ENCODE measurements at regions of chr3 and their contacts with region 1.

Region 1: GRCh38 chr3:58008140-58009025 is at the start of gene FLNB:
- DNase-seq: peak; percentile 72
- ATAC-seq: peak; percentile 93
- H3K4me3 Mint-ChIP-seq: peak within 1 kb of the TSS; percentile 95
- H3K27ac Mint-ChIP-seq: peak within 1 kb of the TSS; percentile 73
- H3K4me1 Mint-ChIP-seq: peaks cover 16% of the 10 kb centered on the region
- H3K27me3 Mint-ChIP-seq: no peaks in the 10 kb centered on the region
- CTCF ChIP-seq: no peak
- total RNA-seq, gene FLNB: 13.4 and 16.7 TPM in 2 replicates

Region 2: GRCh38 chr3:57983734-57984518 is 24.5 kb before region 1 on chr3:
- CTCF ChIA-PET with region 1: interaction called, 3 read pairs
- POLR2A ChIA-PET with region 1: interaction called, 3 read pairs
- intact Hi-C with region 1: loop called (anchors 1 kb)
- DNase-seq: peak; percentile 34
- ATAC-seq: peak; percentile 97
- H3K4me3 Mint-ChIP-seq: no peak overlapping the region
- H3K27ac Mint-ChIP-seq: peak overlapping the region; percentile 50
- H3K4me1 Mint-ChIP-seq: peaks cover 27% of the 10 kb centered on the region
- H3K27me3 Mint-ChIP-seq: no peaks in the 10 kb centered on the region
- CTCF ChIP-seq: no peak

Region 3: DNA sequence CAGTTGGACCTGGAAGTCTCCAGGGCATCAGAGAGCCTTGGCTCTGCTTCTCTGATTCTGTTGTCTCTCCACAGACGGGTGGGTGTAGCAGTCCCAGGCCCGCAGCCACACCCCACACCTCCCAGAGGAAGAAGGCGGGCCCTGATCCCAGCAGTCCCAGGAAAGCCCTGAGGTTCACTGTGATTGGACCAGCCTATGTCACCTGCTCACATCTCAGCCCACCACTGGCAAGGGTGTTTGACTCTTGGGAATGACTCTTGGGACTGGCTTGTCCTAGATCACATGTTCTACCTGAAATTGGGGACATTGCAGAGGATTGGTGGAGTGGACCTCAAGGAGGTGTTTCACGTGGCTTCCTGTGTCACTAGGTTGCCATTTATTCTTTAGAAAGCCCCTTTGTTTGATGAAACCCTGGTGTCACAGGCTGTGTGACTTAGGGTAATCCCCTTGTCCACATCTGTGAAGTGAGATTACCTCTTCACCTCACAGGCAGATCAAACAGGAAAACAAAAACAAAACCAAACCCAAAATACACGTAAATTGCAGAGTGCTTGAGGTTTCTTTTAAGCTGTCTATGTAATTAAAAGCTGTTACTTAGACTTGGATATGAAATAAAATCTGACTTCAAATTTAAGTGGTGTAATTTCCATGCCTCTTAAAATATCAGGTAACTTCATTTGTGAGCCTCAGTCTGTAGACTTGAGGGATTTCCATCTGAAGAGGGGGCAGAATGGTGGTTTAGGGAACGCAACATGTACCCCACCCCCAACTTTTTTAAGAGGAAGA is 26.5 kb after region 1 on chr3:
- CTCF ChIA-PET with region 1: no interaction called
- POLR2A ChIA-PET with region 1: interaction called, 8 read pairs
- intact Hi-C with region 1: loop called (anchors 2 kb)
- DNase-seq: no peak
- ATAC-seq: peak; percentile 92
- H3K4me3 Mint-ChIP-seq: peak overlapping the region; percentile 57
- H3K27ac Mint-ChIP-seq: peak overlapping the region; percentile 77
- H3K4me1 Mint-ChIP-seq: peaks cover 37% of the 10 kb centered on the region
- H3K27me3 Mint-ChIP-seq: no peaks in the 10 kb centered on the region
- CTCF ChIP-seq: no peak

Region 4: GRCh38 chr3:58116161-58116955 is 108.0 kb after region 1 on chr3:
- CTCF ChIA-PET with region 1: interaction called, 6 read pairs
- POLR2A ChIA-PET with region 1: interaction called, 4 read pairs
- intact Hi-C with region 1: loop called (anchors 1 kb)
- DNase-seq: peak; percentile 57
- ATAC-seq: peak; percentile 90
- H3K4me3 Mint-ChIP-seq: peak overlapping the region; percentile 60
- H3K27ac Mint-ChIP-seq: peak overlapping the region; percentile 92
- H3K4me1 Mint-ChIP-seq: peaks cover 74% of the 10 kb centered on the region
- H3K27me3 Mint-ChIP-seq: no peaks in the 10 kb centered on the region
- CTCF ChIP-seq: no peak

Region 5: GRCh38 chr3:58630076-58630709 is 621.8 kb after region 1 on chr3:
- CTCF ChIA-PET with region 1: no interaction called
- POLR2A ChIA-PET with region 1: no interaction called
- intact Hi-C with region 1: loop called (anchors 10 kb)
- DNase-seq: peak; percentile 29
- ATAC-seq: peak; percentile 76
- H3K4me3 Mint-ChIP-seq: no peak overlapping the region
- H3K27ac Mint-ChIP-seq: no peak overlapping the region
- H3K4me1 Mint-ChIP-seq: peaks cover 1% of the 10 kb centered on the region
- H3K27me3 Mint-ChIP-seq: peaks cover 5% of the 10 kb centered on the region
- CTCF ChIP-seq: peak; percentile 96

Measured in activated B cell treated with CpG ODN at 0.5 μM for 24 hours (primary cell).